ENCODE measurements at regions of chr16 and their contacts with region 1.

Region 1: GRCh38 chr16:31142109-31143010 is 6.8 kb upstream of the PRSS8 start:
- DNase-seq: peak; percentile 99
- H3K4me3 ChIP-seq: peak overlapping the region; percentile 62
- H3K27ac ChIP-seq: peak overlapping the region; percentile 23
- H3K4me1 ChIP-seq: peaks cover 16% of the 10 kb centered on the region
- CTCF ChIP-seq: peak; percentile 89

Region 2: GRCh38 chr16:30786936-30787612 is 355.3 kb before region 1 on chr16 and contains the start of gene ZNF629:
- CTCF ChIA-PET with region 1: no interaction called
- POLR2A ChIA-PET with region 1: no interaction called
- intact Hi-C with region 1: no loop called
- DNase-seq: peak; percentile 39
- H3K4me3 ChIP-seq: peak within 1 kb of the TSS; percentile 78
- H3K27ac ChIP-seq: no peak within 1 kb of the TSS
- H3K4me1 ChIP-seq: peaks cover 10% of the 10 kb centered on the region
- CTCF ChIP-seq: no peak
- total RNA-seq, gene ZNF629: 1.9 and 2.5 TPM in 2 replicates

Region 3: GRCh38 chr16:30941600-30942425 is 200.5 kb before region 1 on chr16:
- CTCF ChIA-PET with region 1: no interaction called
- POLR2A ChIA-PET with region 1: no interaction called
- intact Hi-C with region 1: no loop called
- DNase-seq: peak; percentile 74
- H3K4me3 ChIP-seq: no peak overlapping the region
- H3K27ac ChIP-seq: no peak overlapping the region
- H3K4me1 ChIP-seq: peaks cover 13% of the 10 kb centered on the region
- CTCF ChIP-seq: peak; percentile 92

Region 4: DNA sequence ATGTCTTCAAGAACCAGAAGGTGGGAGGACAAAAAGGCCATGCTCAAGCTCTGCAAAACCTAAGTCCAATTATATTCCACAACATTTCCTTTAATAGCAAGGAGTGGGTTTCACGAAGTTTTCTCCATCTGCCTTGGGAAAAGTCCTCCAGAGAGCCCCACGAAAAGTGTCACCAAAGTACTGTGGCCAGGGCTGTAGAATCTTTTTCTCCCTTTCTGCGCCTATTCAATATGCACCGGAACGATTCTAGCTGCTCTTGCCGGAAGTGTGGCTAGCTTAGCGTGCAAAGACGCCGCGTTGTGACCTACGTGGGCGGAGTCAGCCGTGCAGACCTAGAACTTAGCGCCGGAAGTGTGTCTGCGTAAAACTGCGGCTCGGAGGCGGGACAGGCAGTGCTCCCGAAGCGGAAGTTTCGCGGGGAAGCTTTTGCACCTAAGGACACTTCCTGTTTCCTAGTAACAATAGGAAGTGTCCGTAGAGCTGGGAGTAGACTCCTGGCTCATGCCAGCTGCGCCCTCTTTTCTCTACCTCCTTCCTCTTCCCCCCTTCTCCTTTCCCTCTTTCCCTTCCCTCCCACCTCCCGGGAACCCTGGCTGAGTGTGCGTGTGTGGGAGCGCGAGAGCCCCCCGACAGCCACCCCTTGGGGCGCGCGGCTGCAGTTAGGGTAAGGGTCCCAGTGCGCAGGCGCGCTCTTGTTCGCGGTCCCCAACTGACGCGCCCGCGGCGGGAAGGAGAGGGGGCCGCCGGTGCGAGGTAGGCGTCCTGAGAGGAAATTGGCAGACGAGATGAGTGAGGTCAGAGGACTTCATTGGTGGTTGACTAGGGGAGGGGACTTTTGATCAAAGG is 68.2 kb before region 1 on chr16 and contains the starts of genes ZNF646 and ZNF668:
- CTCF ChIA-PET with region 1: interaction called, 4 read pairs
- POLR2A ChIA-PET with region 1: interaction called, 3 read pairs
- intact Hi-C with region 1: loop called (anchors 1 kb)
- DNase-seq: peak; percentile 100
- H3K4me3 ChIP-seq: peak within 1 kb of the TSS; percentile 88
- H3K27ac ChIP-seq: peak within 1 kb of the TSS; percentile 84
- H3K4me1 ChIP-seq: peaks cover 15% of the 10 kb centered on the region
- CTCF ChIP-seq: no peak
- total RNA-seq, gene ZNF646: 25.4 and 30.1 TPM in 2 replicates
- total RNA-seq, gene ZNF668: 7.8 and 18.7 TPM in 2 replicates

Region 5: DNA sequence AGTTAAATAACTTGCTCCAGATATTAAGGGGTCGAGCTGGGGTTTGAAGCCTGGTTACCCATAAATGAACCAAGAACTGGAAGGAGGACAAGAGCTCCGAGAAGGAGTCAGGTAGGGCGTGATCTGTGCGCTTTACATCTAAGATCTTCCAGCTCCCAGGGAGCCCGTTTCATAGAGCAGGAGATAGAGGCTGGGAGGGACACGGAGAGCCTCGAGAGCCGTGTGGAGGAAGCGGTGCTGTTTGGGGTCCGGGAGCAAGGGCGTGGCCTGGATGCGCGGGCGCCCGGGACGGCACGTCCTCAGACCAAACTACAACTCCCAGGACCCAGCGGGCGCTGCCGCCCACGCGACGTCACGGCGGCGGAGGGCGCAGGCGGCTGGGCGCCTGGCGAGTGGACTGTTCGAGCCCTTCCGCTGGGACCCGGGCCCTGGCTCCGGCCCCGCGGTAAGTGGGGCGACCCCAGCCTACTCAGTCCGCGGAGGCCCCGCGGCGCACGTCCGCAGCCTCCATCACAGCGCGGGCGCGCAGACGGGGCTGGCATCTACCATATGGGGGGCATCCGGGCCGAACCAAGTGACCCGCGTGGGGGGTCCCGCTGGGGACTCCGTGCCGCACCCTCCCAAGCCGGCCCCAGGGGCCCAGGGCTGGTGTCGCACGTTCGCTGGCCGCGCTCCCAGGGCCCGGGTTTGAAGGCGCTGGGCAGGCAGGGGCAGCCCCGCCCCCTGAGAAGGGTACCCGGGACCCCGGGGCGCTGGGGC is 34.1 kb before region 1 on chr16 and contains the start of gene BCKDK:
- CTCF ChIA-PET with region 1: no interaction called
- POLR2A ChIA-PET with region 1: interaction called, 3 read pairs
- intact Hi-C with region 1: loop called (anchors 2 kb)
- DNase-seq: peak; percentile 88
- H3K4me3 ChIP-seq: peak within 1 kb of the TSS; percentile 87
- H3K27ac ChIP-seq: peak within 1 kb of the TSS; percentile 38
- H3K4me1 ChIP-seq: peaks cover 18% of the 10 kb centered on the region
- CTCF ChIP-seq: no peak
- total RNA-seq, gene BCKDK: 25.0 and 40.4 TPM in 2 replicates

Region 6: DNA sequence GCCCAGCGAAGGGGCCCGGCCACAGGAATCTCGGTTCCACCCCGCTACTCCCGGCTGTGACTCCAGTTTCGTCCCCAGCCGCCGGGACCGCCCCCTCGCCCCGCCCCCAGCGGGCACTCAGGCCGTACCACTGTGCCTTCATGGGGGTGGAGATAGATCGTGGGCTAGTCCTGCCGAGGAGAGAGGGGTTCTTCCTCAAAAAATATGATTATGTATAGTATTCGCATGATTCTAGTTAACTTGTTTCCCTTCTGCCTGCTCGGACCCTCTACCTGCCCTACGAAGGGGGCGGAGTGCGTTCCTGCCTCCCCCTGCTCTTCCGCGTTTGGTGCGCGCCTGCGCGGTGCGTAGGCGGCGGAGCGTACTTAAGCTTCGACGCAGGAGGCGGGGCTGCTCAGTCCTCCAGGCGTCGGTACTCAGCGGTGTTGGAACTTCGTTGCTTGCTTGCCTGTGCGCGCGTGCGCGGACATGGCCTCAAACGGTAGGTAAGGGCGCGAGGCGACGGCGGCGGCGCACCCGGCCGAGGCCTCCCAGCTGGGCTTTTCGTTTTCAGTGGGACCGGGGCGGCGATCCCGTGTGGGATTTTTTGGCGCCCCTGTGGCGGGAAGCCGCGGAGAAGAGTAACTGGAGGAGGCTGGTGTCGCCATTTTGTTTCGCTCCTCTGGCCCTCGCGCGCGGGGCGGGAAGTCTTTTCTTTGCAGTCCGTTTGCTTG is 37.5 kb after region 1 on chr16 and contains the start of gene FUS:
- CTCF ChIA-PET with region 1: interaction called, 3 read pairs
- POLR2A ChIA-PET with region 1: interaction called, 4 read pairs
- intact Hi-C with region 1: loop called (anchors 1 kb)
- DNase-seq: peak; percentile 93
- H3K4me3 ChIP-seq: peak within 1 kb of the TSS; percentile 90
- H3K27ac ChIP-seq: peak within 1 kb of the TSS; percentile 81
- H3K4me1 ChIP-seq: peaks cover 44% of the 10 kb centered on the region
- CTCF ChIP-seq: no peak
- total RNA-seq, gene FUS: 90.0 and 104 TPM in 2 replicates

Region 7: DNA sequence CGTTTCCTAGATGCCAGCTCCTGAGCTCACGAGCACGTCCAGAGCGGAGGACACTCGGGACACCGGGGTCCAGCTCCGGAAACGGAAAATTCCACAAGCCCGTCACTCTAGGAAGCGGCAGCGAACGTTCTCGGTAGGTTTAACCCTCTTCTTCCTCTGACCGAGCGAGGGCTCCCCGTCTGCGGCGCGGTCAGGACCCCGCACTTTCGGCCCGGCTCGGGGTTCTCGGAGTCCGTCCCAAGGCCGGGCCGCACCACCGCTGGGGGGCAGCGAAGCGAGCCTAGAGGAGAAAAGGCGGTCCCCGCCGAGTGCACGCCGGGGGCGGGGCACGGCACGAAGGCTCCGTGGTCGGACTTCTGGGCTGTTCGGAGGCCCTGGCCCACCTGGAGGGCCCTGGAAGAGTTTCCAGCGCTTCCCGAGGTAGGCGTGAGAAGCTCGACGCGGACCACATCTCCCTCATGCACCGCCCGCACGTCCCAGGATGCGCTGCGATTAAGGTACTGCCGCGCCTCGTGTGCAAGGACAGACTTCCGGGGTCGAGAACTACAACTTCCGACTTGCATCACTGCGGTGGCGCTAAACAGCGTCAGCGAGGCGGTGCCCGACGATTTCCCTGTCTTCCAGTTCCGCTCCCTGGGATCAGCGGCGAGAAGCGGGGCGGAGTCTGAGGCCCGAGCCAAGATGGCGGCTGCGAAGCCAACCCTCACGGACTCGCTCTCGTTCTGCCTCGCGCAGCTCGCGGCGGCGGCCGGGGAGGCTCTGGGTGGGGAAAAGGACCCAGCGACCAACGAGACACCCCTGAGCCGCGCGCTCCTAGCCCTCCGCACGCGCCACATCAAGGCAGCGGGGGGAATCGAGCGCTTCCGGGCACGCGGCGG is 316.7 kb after region 1 on chr16 and contains the start of gene ARMC5:
- CTCF ChIA-PET with region 1: no interaction called
- POLR2A ChIA-PET with region 1: no interaction called
- intact Hi-C with region 1: loop called (anchors 1 kb)
- DNase-seq: peak; percentile 98
- H3K4me3 ChIP-seq: peak within 1 kb of the TSS; percentile 92
- H3K27ac ChIP-seq: peak within 1 kb of the TSS; percentile 80
- H3K4me1 ChIP-seq: peaks cover 35% of the 10 kb centered on the region
- CTCF ChIP-seq: peak; percentile 74
- total RNA-seq, gene ARMC5: 6.4 and 7.0 TPM in 2 replicates